Tibial artery (tissue), 4 donors: ENCODE measurements at regions of chr17 and their contacts with region 1.

Region 1: GRCh38 chr17:29777663-29778062 is 152.4 kb downstream of the SSH2 start:
- DNase-seq: no peak
- H3K4me3 ChIP-seq: no peak overlapping the region
- H3K27ac ChIP-seq: no peak overlapping the region
- H3K4me1 ChIP-seq: peaks cover 0 to 4% (median 2%) of the 10 kb centered on the region in 4 donors
- H3K27me3 ChIP-seq: no peaks in the 10 kb centered on the region
- CTCF ChIP-seq: no peak

Region 2: GRCh38 chr17:29640413-29640812 is 137.2 kb before region 1 on chr17:
- intact Hi-C with region 1: loop called (anchors 5 kb)
- DNase-seq: no peak
- H3K4me3 ChIP-seq: no peak overlapping the region
- H3K27ac ChIP-seq: peak overlapping the region; percentile 69 to 70
- H3K4me1 ChIP-seq: peaks cover 0 to 64% (median 33%) of the 10 kb centered on the region in 4 donors
- H3K27me3 ChIP-seq: no peaks in the 10 kb centered on the region
- CTCF ChIP-seq: no peak